ENCODE measurements at regions of chr16 and their contacts with region 1.

Region 1: DNA sequence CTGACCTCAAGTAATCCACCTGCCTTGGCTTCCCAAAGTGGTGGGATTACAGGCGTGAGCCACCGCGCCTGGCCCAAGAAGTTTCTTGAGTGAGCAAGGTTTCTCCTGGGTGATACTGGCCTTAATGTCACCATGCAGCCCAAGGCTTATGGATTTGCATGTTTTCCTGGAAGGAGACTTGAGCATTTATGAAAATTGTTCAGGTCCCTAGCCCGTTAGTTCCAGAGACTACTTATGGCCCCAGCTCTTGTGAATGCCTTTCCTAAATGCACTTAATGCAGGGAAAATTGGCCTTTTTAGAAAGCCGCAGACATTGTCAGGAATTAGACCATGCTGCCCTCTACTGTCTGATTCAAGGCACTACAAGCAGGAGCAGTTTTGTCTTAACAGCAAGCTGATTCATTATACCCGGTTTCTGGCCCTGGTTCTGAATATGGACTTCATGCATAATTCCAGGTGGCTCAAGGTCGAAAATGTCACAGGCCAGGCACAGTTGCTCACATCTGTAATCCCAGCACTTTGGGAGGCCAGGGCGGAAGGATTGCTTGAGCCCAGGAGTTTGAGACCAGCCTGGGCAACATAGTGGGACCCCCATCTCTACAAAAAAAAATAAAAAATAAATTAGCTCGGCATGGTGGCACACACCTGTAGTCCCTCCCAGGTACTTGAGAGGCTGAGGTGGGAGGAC is 91.3 kb downstream of the SNX29 start:
- DNase-seq: peak; percentile 50
- H3K4me3 ChIP-seq: no peak overlapping the region
- H3K27ac ChIP-seq: no peak overlapping the region
- H3K4me1 ChIP-seq: peaks cover 2% of the 10 kb centered on the region
- H3K27me3 ChIP-seq: no peaks in the 10 kb centered on the region
- CTCF ChIP-seq: peak; percentile 95 to 98

Region 2: DNA sequence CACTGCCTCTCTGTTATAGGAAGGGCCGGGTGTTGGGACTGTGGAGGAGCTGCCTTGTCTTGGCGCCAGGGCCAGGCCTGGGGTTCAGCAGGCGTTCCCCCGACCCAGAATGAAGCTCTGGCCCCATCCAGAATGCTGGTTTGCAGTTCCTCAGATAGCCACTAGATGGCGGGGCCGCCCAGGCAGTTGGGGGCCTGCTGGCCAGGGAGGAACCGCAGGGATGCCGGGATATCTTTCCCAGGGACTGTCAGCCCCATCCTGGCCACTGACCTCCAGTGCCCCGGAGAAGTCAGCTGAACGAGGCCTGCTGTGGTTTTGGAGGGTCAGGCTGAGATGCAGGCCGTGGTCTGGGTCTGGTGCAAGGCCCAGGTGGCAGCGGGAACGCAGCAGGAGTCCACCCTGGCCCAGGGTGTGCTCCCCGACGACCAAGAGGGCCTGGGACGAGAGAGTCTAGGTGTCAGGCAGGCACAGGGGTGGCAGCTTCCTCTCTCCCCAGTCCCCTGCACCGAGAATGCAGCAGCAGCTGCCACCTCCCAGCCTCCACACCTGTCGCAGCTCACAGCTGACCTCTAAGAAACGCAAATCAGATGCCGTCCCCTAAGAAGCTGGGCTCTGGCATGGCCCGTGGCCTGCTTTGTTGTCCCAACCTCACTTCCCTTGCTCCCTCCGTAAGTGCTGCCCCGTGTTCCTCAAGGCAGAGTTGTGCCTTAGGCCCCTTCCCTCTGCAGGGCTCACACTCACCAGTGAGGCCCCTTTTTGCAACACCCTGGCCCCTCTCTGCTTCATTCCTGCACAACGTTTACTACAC is 671.4 kb before region 1 on chr16:
- CTCF ChIA-PET with region 1: no interaction called
- dilution Hi-C with region 1: no loop called
- in situ Hi-C with region 1: loop called in 1 of 2 experiments (anchors 25 kb)
- intact Hi-C with region 1: loop called (anchors 1 kb)
- DNase-seq: peak; percentile 39
- H3K4me3 ChIP-seq: no peak overlapping the region
- H3K27ac ChIP-seq: no peak overlapping the region
- H3K4me1 ChIP-seq: no peaks in the 10 kb centered on the region
- H3K27me3 ChIP-seq: no peaks in the 10 kb centered on the region
- CTCF ChIP-seq: peak; percentile 96 to 98

Region 3: GRCh38 chr16:11535471-11535870 is 532.4 kb before region 1 on chr16:
- CTCF ChIA-PET with region 1: no interaction called
- dilution Hi-C with region 1: no loop called
- in situ Hi-C with region 1: no loop called
- intact Hi-C with region 1: loop called (anchors 5 kb)
- DNase-seq: peak; percentile 82
- H3K4me3 ChIP-seq: no peak overlapping the region
- H3K27ac ChIP-seq: no peak overlapping the region
- H3K4me1 ChIP-seq: peaks cover 12% of the 10 kb centered on the region
- H3K27me3 ChIP-seq: no peaks in the 10 kb centered on the region
- CTCF ChIP-seq: no peak

Region 4: GRCh38 chr16:11851294-11852091 is 216.4 kb before region 1 on chr16 and contains the start of gene RSL1D1:
- CTCF ChIA-PET with region 1: no interaction called
- dilution Hi-C with region 1: no loop called
- in situ Hi-C with region 1: loop called in 1 of 2 experiments (anchors 25 kb)
- intact Hi-C with region 1: no loop called
- DNase-seq: peak; percentile 94
- H3K4me3 ChIP-seq: peak within 1 kb of the TSS; percentile 77 to 100 (median 87)
- H3K27ac ChIP-seq: peak within 1 kb of the TSS; percentile 70
- H3K4me1 ChIP-seq: peaks cover 11% of the 10 kb centered on the region
- H3K27me3 ChIP-seq: no peaks in the 10 kb centered on the region
- CTCF ChIP-seq: no peak
- total RNA-seq, gene RSL1D1: 127 to 209 TPM

Region 5: GRCh38 chr16:11915644-11916523 is 152.0 kb before region 1 on chr16 and contains the start of gene GSPT1:
- CTCF ChIA-PET with region 1: no interaction called
- dilution Hi-C with region 1: no loop called
- in situ Hi-C with region 1: no loop called
- intact Hi-C with region 1: loop called (anchors 10 kb)
- DNase-seq: peak; percentile 98
- H3K4me3 ChIP-seq: peak within 1 kb of the TSS; percentile 82 to 91 (median 86)
- H3K27ac ChIP-seq: peak within 1 kb of the TSS; percentile 78
- H3K4me1 ChIP-seq: peaks cover 22% of the 10 kb centered on the region
- H3K27me3 ChIP-seq: no peaks in the 10 kb centered on the region
- CTCF ChIP-seq: no peak
- total RNA-seq, gene GSPT1: 95.7 to 182 TPM

Region 6: GRCh38 chr16:11972128-11972527 is 95.7 kb before region 1 on chr16:
- CTCF ChIA-PET with region 1: interaction called, 3 read pairs
- dilution Hi-C with region 1: no loop called
- in situ Hi-C with region 1: no loop called
- intact Hi-C with region 1: loop called (anchors 1 kb)
- DNase-seq: no peak
- H3K4me3 ChIP-seq: no peak overlapping the region
- H3K27ac ChIP-seq: no peak overlapping the region
- H3K4me1 ChIP-seq: peaks cover 3% of the 10 kb centered on the region
- H3K27me3 ChIP-seq: no peaks in the 10 kb centered on the region
- CTCF ChIP-seq: peak in 1 of 2 donors; percentile 7

Region 7: DNA sequence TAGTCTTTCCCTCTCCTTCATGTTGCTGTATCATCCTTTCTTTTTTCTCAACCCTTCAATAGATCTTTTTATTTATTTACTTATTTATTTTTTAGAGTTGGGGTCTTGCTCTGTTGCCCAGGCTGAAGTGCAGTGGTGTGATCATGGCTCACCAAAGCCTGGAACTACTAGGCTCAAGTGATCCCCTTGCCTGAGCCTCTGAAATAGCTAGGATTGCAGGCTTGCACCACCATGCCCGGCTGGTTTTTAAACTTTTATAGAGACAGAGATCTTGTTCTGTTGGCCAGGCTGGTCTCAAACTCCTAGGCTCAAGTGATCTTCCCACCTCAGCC is 39.6 kb before region 1 on chr16:
- CTCF ChIA-PET with region 1: no interaction called
- dilution Hi-C with region 1: no loop called
- in situ Hi-C with region 1: no loop called
- intact Hi-C with region 1: no loop called
- DNase-seq: no peak
- H3K4me3 ChIP-seq: no peak overlapping the region
- H3K27ac ChIP-seq: no peak overlapping the region
- H3K4me1 ChIP-seq: peaks cover 26% of the 10 kb centered on the region
- H3K27me3 ChIP-seq: no peaks in the 10 kb centered on the region
- CTCF ChIP-seq: no peak

Region 8: GRCh38 chr16:12426122-12426521 is 358.3 kb after region 1 on chr16:
- CTCF ChIA-PET with region 1: no interaction called
- dilution Hi-C with region 1: no loop called
- in situ Hi-C with region 1: no loop called
- intact Hi-C with region 1: no loop called
- DNase-seq: no peak
- H3K4me3 ChIP-seq: no peak overlapping the region
- H3K27ac ChIP-seq: no peak overlapping the region
- H3K4me1 ChIP-seq: no peaks in the 10 kb centered on the region
- H3K27me3 ChIP-seq: no peaks in the 10 kb centered on the region
- CTCF ChIP-seq: no peak

Measured in mammary epithelial cell (primary cell).